Activated naive CD4-positive, alpha-beta T cell treated with anti-CD3 and anti-CD28 coated beads for 36 hours (primary cell): ENCODE measurements at regions of chr2 and their contacts with region 1.

Region 1: DNA sequence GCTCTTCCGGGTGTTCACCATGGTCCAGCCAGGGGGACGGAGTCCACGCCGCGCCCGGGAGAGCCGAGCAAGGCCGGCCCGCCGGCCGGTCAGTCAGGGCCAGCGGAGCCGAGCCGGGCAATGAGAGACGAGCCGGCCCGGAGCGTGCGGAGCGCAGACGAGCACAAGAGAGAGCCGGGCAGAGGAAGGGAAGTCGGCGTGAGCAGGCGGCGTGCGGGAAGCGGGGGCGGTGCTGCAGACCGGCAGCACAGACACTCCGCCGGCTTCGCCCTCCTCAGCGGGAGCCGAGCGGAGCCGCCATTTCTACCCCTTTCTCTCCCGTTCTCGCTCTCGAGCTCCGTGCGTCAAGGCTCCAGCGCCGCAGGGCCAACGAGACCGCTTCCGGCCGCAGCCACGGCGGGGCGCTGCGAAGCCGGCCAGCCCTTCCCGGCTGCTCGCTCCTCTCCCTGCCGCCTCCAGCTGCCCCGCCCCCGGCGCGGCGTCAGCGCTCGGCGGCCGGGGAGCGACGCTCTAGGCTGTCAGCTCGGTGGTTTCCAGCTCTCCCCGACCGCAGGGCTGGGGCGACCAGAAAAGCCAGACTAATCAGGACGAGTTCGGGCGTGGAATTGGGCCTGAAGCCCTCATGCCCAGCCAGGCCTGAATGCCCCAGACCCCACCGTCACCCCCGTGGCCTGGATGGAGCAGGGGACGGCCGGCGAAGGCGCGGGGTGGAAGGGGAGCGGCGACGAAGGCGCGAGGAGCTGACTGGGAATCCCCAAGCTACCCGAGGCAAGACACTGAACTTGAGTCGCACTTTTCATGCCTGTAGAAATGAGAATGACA is at the start of gene ATAD2B:
- DNase-seq: peak; percentile 93
- H3K4me3 Mint-ChIP-seq: peak within 1 kb of the TSS; percentile 96
- H3K27ac Mint-ChIP-seq: peak within 1 kb of the TSS; percentile 99
- H3K4me1 Mint-ChIP-seq: peaks cover 36% of the 10 kb centered on the region
- H3K27me3 Mint-ChIP-seq: no peaks in the 10 kb centered on the region
- total RNA-seq, gene ATAD2B: 12.9 to 15.4 TPM

Region 2: GRCh38 chr2:23824777-23825212 is 102.2 kb before region 1 on chr2:
- CTCF ChIA-PET with region 1: interaction called, 29 read pairs
- intact Hi-C with region 1: loop called (anchors 1 kb)
- DNase-seq: peak; percentile 41
- H3K4me3 Mint-ChIP-seq: no peak overlapping the region
- H3K27ac Mint-ChIP-seq: no peak overlapping the region
- H3K4me1 Mint-ChIP-seq: peaks cover 5% of the 10 kb centered on the region
- H3K27me3 Mint-ChIP-seq: no peaks in the 10 kb centered on the region

Region 3: DNA sequence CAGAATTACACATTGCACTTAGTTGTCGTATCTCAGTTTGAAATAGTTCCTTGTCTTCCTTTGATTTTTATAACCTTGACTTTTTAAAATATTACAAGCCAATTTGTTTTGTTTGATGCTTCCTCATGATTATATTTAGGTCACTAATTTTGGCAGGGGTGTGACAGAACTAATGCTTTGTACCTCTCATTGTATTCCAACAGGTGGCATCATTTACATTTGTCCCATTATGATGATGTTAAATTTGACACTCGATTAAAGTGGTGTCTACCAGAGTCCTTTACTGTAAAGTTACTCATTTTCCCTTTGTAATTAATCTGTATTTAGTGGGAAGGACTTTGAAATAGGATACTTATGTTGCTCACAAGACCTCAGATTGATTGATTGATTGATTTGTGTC is 61.4 kb after region 1 on chr2:
- CTCF ChIA-PET with region 1: no interaction called
- intact Hi-C with region 1: loop called (anchors 2 kb)
- DNase-seq: no peak
- H3K4me3 Mint-ChIP-seq: no peak overlapping the region
- H3K27ac Mint-ChIP-seq: no peak overlapping the region
- H3K4me1 Mint-ChIP-seq: no peaks in the 10 kb centered on the region
- H3K27me3 Mint-ChIP-seq: no peaks in the 10 kb centered on the region

Region 4: GRCh38 chr2:24075915-24076848 is 149.2 kb after region 1 on chr2 and contains the start of gene SF3B6:
- CTCF ChIA-PET with region 1: interaction called, 10 read pairs
- intact Hi-C with region 1: loop called (anchors 1 kb)
- DNase-seq: peak; percentile 100
- H3K4me3 Mint-ChIP-seq: peak within 1 kb of the TSS; percentile 97
- H3K27ac Mint-ChIP-seq: peak within 1 kb of the TSS; percentile 93
- H3K4me1 Mint-ChIP-seq: peaks cover 36% of the 10 kb centered on the region
- H3K27me3 Mint-ChIP-seq: no peaks in the 10 kb centered on the region
- total RNA-seq, gene SF3B6: 151 to 164 TPM

Region 5: DNA sequence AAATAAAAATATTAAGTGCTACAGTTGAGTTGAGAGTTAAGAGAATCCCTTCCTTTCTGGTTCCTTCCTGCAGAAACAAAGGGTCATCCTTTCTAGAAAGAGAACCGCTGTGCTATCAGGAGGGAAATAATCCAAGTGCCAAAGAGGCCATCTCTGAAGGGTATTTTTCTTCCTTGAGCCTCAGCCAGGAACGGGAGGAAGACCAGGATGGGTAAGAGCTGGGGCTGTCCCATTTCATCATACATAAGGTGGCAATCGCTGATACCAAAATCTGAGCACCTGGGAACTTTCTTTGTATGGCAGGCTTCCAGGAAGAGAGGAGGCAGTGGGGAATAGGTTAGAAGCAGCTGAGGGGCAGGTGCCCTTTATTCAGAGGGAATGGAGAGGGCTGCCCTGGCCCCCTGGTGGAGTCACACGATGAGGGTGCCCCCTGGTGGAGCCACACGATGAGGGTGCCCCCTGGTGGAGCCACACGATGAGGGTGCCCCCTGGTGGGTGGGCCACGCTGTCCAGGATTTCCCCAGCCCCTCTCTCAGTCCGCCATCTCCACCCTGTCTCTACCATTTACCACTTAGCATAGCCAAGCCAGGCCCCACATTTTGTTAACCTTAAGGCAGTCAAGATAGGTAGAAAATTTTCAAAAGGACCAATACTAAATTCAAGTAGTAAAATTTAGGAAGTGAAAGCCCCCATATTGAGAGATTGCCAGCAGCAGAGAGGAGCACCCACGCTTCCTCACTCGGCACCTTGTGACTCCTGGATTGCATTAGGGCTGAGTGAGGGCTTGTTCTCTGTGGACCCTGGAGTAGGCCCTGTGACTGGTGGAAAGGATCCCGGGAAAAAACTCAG is 237.4 kb after region 1 on chr2:
- CTCF ChIA-PET with region 1: no interaction called
- intact Hi-C with region 1: loop called (anchors 1 kb)
- DNase-seq: peak; percentile 54
- H3K4me3 Mint-ChIP-seq: no peak overlapping the region
- H3K27ac Mint-ChIP-seq: no peak overlapping the region
- H3K4me1 Mint-ChIP-seq: no peaks in the 10 kb centered on the region
- H3K27me3 Mint-ChIP-seq: no peaks in the 10 kb centered on the region

Region 6: DNA sequence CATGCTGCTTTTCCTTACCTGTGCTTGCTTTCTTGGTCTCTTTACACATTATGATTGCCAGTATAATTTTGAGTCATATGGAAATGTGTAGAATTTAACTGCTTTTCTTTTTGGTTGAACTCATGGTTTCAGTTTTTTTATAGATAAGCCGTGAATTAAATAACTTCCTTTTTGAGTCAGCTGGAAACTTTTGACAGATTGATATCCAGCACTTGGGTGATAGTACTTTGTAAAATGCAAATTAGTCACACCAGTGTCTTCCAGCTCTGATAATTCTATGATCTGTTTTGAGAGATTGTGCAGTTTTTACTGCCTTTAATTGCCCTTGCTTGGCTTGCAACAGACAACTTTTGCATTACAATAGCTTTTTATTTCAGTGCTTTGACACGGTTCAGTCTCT is 650.5 kb after region 1 on chr2:
- CTCF ChIA-PET with region 1: no interaction called
- intact Hi-C with region 1: loop called (anchors 5 kb)
- DNase-seq: no peak
- H3K4me3 Mint-ChIP-seq: no peak overlapping the region
- H3K27ac Mint-ChIP-seq: peak overlapping the region; percentile 69
- H3K4me1 Mint-ChIP-seq: peaks cover 74% of the 10 kb centered on the region
- H3K27me3 Mint-ChIP-seq: no peaks in the 10 kb centered on the region